ENCODE measurements at regions of chr3 and their contacts with region 1.

Region 1: GRCh38 chr3:156674046-156674910 is at the start of gene TIPARP:
- DNase-seq: peak; percentile 99
- H3K4me3 ChIP-seq: peak within 1 kb of the TSS; percentile 89 to 91
- H3K27ac ChIP-seq: peak within 1 kb of the TSS; percentile 86 to 92
- H3K4me1 ChIP-seq: peaks cover 0 to 7% of the 10 kb centered on the region in 2 experiments; a peak in 2 of 4 replicates
- H3K27me3 ChIP-seq: no peaks in the 10 kb centered on the region
- CTCF ChIP-seq: peak; percentile 67
- EP300 ChIP-seq: peak; percentile 26 to 31; a peak in 1 of 4 replicates
- RAD21 ChIP-seq: peak; percentile 64
- polyA plus RNA-seq, gene TIPARP: 6.2 TPM in 2 replicates

Region 2: GRCh38 chr3:156554842-156555687 is 119.2 kb before region 1 on chr3 and contains the start of gene SSR3:
- CTCF ChIA-PET with region 1: interaction called, 19 read pairs
- POLR2A ChIA-PET with region 1: interaction called, 3 read pairs
- DNase-seq: peak; percentile 92
- H3K4me3 ChIP-seq: peak within 1 kb of the TSS; percentile 92 to 94
- H3K27ac ChIP-seq: peak within 1 kb of the TSS; percentile 89 to 94
- H3K4me1 ChIP-seq: peaks cover 25 to 31% of the 10 kb centered on the region in 2 experiments
- H3K27me3 ChIP-seq: no peaks in the 10 kb centered on the region
- CTCF ChIP-seq: no peak
- EP300 ChIP-seq: peak in 1 of 2 experiments; percentile 27; a peak in 1 of 4 replicates
- RAD21 ChIP-seq: no peak
- polyA plus RNA-seq, gene SSR3: 61.7 and 96.1 TPM in 2 replicates

Region 3: GRCh38 chr3:156716105-156716862 is 42.0 kb after region 1 on chr3:
- CTCF ChIA-PET with region 1: no interaction called
- POLR2A ChIA-PET with region 1: no interaction called
- DNase-seq: no peak
- H3K4me3 ChIP-seq: no peak overlapping the region
- H3K27ac ChIP-seq: no peak overlapping the region
- H3K4me1 ChIP-seq: peaks cover 0 to 4% of the 10 kb centered on the region in 2 experiments; a peak in 1 of 4 replicates
- H3K27me3 ChIP-seq: no peaks in the 10 kb centered on the region
- CTCF ChIP-seq: no peak
- EP300 ChIP-seq: no peak
- RAD21 ChIP-seq: no peak

Region 4: GRCh38 chr3:156787926-156788663 is 113.8 kb after region 1 on chr3:
- CTCF ChIA-PET with region 1: no interaction called
- POLR2A ChIA-PET with region 1: no interaction called
- DNase-seq: peak; percentile 17
- H3K4me3 ChIP-seq: no peak overlapping the region
- H3K27ac ChIP-seq: peak overlapping the region; percentile 78 to 82
- H3K4me1 ChIP-seq: peaks cover 3 to 38% of the 10 kb centered on the region in 2 experiments
- H3K27me3 ChIP-seq: no peaks in the 10 kb centered on the region
- CTCF ChIP-seq: peak; percentile 23
- EP300 ChIP-seq: peak in 1 of 2 experiments; percentile 86; a peak in 2 of 4 replicates
- RAD21 ChIP-seq: peak; percentile 8; the same call in 1 of the 2 replicates

Region 5: DNA sequence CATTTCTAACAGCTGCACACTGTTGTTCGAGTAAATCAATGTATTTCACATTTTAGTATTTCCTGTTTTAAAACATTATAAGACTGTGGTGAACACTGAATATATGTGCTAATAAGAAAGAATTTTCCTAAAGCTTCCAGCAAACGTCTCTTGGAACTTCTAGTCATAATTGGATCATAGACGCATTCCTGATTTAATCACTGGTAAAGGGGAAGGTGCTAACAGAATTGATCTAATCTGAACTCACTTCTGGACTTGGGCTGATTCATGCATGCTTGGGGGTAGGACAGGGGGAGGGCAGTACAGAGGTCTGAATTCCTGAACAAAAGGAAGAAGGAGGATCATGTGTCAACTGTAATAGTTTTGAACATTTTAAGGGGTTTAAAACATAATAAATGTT is 144.6 kb after region 1 on chr3:
- CTCF ChIA-PET with region 1: interaction called, 10 read pairs
- POLR2A ChIA-PET with region 1: no interaction called
- DNase-seq: no peak
- H3K4me3 ChIP-seq: no peak overlapping the region
- H3K27ac ChIP-seq: peak overlapping the region in 1 of 2 experiments; percentile 14; a peak in 3 of 4 replicates
- H3K4me1 ChIP-seq: peaks cover 16 to 24% of the 10 kb centered on the region in 2 experiments; a peak in 3 of 4 replicates
- H3K27me3 ChIP-seq: no peaks in the 10 kb centered on the region
- CTCF ChIP-seq: no peak
- EP300 ChIP-seq: peak in 1 of 2 experiments; percentile 55; a peak in 2 of 4 replicates
- RAD21 ChIP-seq: no peak

Region 6: DNA sequence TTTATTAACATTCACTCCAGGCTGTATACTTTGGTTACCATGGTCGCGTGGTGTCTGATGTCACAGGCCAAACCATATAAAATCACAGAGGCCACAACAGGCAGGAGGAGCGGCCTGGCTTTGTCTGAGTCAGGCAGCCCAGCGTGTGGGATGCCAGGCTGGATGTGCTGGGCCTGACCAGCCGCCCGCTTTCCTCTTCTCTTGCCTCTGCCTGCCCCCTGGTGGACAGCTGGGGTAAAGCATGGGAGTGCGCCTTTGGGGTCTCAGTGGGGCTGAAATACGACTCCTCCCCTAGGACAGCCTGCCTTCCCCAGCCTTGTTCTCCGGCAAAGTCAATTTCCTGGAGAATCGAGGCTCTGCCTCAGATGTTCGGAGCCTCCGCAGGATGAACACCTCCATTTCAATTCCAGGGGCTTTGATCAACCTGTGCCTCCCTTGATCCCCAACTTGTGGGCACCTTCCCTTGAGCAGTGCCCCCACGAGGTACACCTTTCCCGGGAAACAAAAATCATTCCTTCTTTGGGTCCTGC is 407.5 kb after region 1 on chr3:
- CTCF ChIA-PET with region 1: interaction called, 75 read pairs
- POLR2A ChIA-PET with region 1: interaction called, 3 read pairs
- DNase-seq: peak; percentile 84
- H3K4me3 ChIP-seq: no peak overlapping the region; a peak in 1 of 4 replicates
- H3K27ac ChIP-seq: peak overlapping the region; percentile 43 to 58; a peak in 2 of 4 replicates
- H3K4me1 ChIP-seq: peaks cover 18 to 27% of the 10 kb centered on the region in 2 experiments; a peak in 3 of 4 replicates
- H3K27me3 ChIP-seq: no peaks in the 10 kb centered on the region
- CTCF ChIP-seq: peak; percentile 96
- EP300 ChIP-seq: no peak
- RAD21 ChIP-seq: peak; percentile 98

Region 7: DNA sequence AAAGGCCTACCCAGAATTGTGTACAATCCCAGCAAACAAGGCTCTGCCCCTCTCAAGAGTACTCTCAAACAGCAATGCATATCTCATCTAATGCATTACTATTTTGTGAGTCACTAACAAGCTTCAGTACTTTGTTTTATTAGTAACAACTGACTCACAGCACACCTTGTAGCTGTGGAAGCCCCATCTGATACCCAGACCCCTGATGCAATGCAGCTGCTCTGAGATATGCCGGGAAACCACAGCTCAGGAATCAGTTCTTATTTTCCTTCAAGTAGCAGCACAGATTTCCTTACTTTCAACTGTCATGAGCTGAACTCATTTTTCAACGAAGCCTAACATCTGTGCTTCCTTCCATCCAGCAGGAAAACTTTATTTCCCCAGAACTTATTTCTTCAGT is 447.8 kb after region 1 on chr3:
- CTCF ChIA-PET with region 1: interaction called, 10 read pairs
- POLR2A ChIA-PET with region 1: no interaction called
- DNase-seq: no peak
- H3K4me3 ChIP-seq: no peak overlapping the region
- H3K27ac ChIP-seq: peak overlapping the region; percentile 34 to 58
- H3K4me1 ChIP-seq: peaks cover 0 to 30% of the 10 kb centered on the region in 2 experiments; a peak in 3 of 4 replicates
- H3K27me3 ChIP-seq: no peaks in the 10 kb centered on the region
- CTCF ChIP-seq: no peak
- EP300 ChIP-seq: peak in 1 of 2 experiments; percentile 89; a peak in 2 of 4 replicates
- RAD21 ChIP-seq: no peak

Region 8: GRCh38 chr3:157136647-157137387 is 462.5 kb after region 1 on chr3:
- CTCF ChIA-PET with region 1: interaction called, 41 read pairs
- POLR2A ChIA-PET with region 1: no interaction called
- DNase-seq: no peak
- H3K4me3 ChIP-seq: no peak overlapping the region
- H3K27ac ChIP-seq: no peak overlapping the region
- H3K4me1 ChIP-seq: peaks cover 4 to 27% of the 10 kb centered on the region in 2 experiments; a peak in 3 of 4 replicates
- H3K27me3 ChIP-seq: no peaks in the 10 kb centered on the region
- CTCF ChIP-seq: no peak
- EP300 ChIP-seq: no peak
- RAD21 ChIP-seq: no peak

Region 9: DNA sequence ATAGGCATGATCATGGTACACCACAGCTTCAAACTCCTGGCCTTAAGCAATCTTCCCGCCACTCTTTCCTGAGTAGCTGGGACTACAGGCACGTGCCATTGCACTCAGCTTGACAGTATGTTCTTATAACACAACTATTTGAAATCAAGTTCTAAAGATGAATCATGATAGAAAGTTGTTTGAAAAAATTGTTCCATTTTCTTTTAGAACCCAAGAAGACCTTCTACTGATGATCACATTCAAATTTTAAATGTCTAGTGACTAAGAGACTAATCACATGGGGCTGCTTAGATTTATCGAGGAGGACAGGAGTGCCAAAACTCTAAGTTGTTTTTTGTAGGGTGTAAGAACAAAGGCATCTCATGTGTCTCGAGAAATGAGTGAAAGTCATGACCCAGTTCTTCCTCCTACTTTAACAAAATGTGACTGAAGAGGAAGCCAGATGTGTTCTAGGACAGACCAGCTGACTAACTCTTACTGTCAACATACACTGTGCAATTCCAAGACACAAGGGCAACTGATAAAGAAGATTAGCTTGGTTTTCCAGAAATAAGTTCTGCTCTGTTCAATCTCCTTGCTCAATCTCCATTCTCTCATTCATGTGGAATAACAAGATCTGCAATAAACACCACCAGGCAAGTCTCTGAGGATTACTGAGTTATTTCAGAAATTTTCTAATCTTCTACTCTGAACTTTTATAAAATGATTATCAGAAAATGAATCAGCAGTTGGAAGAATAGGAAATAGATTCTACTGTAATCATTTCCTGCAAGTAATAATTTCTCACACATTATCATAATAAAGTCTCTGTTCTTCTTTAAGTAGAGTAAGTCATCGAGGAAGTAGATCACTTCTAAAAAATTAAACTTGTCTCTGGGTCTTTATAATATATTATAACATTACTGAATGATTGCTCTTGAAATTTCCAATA is 608.2 kb after region 1 on chr3:
- CTCF ChIA-PET with region 1: no interaction called
- POLR2A ChIA-PET with region 1: no interaction called
- DNase-seq: no peak
- H3K4me3 ChIP-seq: no peak overlapping the region
- H3K27ac ChIP-seq: peak overlapping the region in 1 of 2 experiments; percentile 77; a peak in 3 of 4 replicates
- H3K4me1 ChIP-seq: peaks cover 0 to 35% of the 10 kb centered on the region in 2 experiments; a peak in 2 of 4 replicates
- H3K27me3 ChIP-seq: no peaks in the 10 kb centered on the region
- CTCF ChIP-seq: no peak
- EP300 ChIP-seq: peak in 1 of 2 experiments; percentile 53; a peak in 2 of 4 replicates
- RAD21 ChIP-seq: no peak